Sciatic nerve (tissue), 2 donors: ENCODE measurements at regions of chr3 and their contacts with region 1.

Region 1: DNA sequence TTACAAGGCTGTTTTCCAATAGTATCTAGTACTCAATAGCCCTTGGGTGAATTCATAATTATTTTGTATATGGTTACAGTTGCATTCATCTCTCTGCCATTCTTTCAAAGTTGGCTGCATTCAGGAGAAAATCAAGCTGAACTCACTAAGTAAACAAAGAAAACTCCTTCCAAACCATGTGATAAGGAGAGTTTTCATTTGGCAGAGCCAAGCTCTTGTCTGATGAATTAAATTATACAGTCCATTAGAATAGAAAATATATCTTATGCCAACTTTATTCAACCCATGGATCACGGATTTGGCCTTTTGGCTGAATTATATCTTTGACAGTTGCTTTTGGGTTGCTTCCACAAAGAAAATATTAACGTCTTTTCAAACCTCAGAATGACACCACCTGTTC is 272.3 kb upstream of the ROBO1 start:
- DNase-seq: no peak
- ATAC-seq: no peak

Region 2: GRCh38 chr3:80451393-80451792 is 411.3 kb after region 1 on chr3:
- intact Hi-C with region 1: no loop called
- DNase-seq: no peak
- ATAC-seq: no peak

Region 3: DNA sequence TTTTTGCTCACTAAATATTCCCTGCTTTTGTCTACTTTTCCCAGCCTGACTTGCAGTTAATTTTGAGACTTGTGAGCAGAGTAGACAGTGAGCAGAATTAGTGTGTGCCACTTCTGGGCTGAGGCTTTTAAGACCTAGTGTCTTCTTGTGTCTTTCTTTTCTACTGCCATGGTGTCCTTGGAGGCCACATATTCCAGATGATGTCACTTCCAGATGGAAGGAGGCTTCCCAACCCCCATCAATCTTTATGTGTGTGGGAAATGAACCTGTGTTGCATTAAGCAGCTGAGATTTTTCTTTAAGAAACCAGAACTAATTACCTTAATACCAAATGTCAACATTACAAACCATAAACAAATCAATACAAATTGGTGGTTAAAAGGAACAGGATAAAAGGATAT is 502.4 kb after region 1 on chr3:
- intact Hi-C with region 1: loop called (anchors 5 kb)
- DNase-seq: no peak
- ATAC-seq: no peak